ENCODE measurements at regions of chr1 and their contacts with region 1.

Region 1: GRCh38 chr1:48082271-48082962 is 85.2 kb upstream of the TRABD2B start:
- DNase-seq: no peak
- H3K4me3 ChIP-seq: no peak overlapping the region
- H3K27ac ChIP-seq: no peak overlapping the region
- H3K4me1 ChIP-seq: no peaks in the 10 kb centered on the region
- H3K27me3 ChIP-seq: no peaks in the 10 kb centered on the region
- CTCF ChIP-seq: no peak

Region 2: GRCh38 chr1:47771751-47772180 is 310.7 kb before region 1 on chr1:
- CTCF ChIA-PET with region 1: no interaction called
- dilution Hi-C with region 1: loop called (anchors 5 kb)
- in situ Hi-C with region 1: no loop called
- intact Hi-C with region 1: no loop called
- DNase-seq: no peak
- H3K4me3 ChIP-seq: no peak overlapping the region
- H3K27ac ChIP-seq: no peak overlapping the region
- H3K4me1 ChIP-seq: no peaks in the 10 kb centered on the region
- H3K27me3 ChIP-seq: no peaks in the 10 kb centered on the region
- CTCF ChIP-seq: no peak

Region 3: GRCh38 chr1:48039088-48040054 is 43.0 kb before region 1 on chr1:
- CTCF ChIA-PET with region 1: no interaction called
- dilution Hi-C with region 1: loop called (anchors 5 kb)
- in situ Hi-C with region 1: no loop called
- intact Hi-C with region 1: no loop called
- DNase-seq: peak; percentile 23
- H3K4me3 ChIP-seq: no peak overlapping the region
- H3K27ac ChIP-seq: no peak overlapping the region
- H3K4me1 ChIP-seq: peaks cover 10% of the 10 kb centered on the region
- H3K27me3 ChIP-seq: no peaks in the 10 kb centered on the region
- CTCF ChIP-seq: no peak

Region 4: DNA sequence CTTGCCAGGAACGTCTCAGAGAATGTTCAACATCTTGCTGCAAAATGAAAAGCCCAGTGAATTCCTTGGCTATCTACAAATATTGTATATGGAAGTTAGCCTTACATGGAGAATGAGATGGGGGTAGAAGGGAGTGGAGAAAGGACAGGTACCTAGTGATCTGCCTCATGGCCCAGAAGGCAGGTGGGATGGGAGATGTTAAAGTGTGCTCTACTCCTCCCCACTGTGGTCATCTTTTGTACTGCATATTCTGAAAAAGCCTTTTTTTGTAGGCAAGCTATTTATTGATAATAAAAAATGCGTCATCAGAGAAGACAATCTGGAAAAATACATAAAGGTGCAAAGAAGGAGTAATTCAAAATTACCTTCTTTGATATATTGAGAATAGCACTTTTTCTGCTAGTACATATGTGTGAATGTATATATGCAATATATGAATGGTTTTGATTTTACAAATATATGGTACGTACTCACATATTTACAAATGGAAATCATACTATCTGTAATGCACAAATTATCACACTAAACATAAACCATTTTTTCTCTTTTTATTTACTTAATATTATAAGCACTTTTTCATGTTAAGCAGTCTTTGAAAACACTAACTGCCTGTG is 121.0 kb after region 1 on chr1:
- CTCF ChIA-PET with region 1: no interaction called
- dilution Hi-C with region 1: no loop called
- in situ Hi-C with region 1: no loop called
- intact Hi-C with region 1: no loop called
- DNase-seq: peak; percentile 48
- H3K4me3 ChIP-seq: no peak overlapping the region
- H3K27ac ChIP-seq: no peak overlapping the region
- H3K4me1 ChIP-seq: peaks cover 15% of the 10 kb centered on the region
- H3K27me3 ChIP-seq: peaks cover 2% of the 10 kb centered on the region
- CTCF ChIP-seq: peak; percentile 58 to 69

Region 5: GRCh38 chr1:48603222-48603621 is 520.8 kb after region 1 on chr1:
- CTCF ChIA-PET with region 1: no interaction called
- dilution Hi-C with region 1: no loop called
- in situ Hi-C with region 1: no loop called
- intact Hi-C with region 1: no loop called
- DNase-seq: no peak
- H3K4me3 ChIP-seq: no peak overlapping the region
- H3K27ac ChIP-seq: no peak overlapping the region
- H3K4me1 ChIP-seq: no peaks in the 10 kb centered on the region
- H3K27me3 ChIP-seq: no peaks in the 10 kb centered on the region
- CTCF ChIP-seq: no peak